ENCODE measurements at regions of chr22 and their contacts with region 1.

Region 1: DNA sequence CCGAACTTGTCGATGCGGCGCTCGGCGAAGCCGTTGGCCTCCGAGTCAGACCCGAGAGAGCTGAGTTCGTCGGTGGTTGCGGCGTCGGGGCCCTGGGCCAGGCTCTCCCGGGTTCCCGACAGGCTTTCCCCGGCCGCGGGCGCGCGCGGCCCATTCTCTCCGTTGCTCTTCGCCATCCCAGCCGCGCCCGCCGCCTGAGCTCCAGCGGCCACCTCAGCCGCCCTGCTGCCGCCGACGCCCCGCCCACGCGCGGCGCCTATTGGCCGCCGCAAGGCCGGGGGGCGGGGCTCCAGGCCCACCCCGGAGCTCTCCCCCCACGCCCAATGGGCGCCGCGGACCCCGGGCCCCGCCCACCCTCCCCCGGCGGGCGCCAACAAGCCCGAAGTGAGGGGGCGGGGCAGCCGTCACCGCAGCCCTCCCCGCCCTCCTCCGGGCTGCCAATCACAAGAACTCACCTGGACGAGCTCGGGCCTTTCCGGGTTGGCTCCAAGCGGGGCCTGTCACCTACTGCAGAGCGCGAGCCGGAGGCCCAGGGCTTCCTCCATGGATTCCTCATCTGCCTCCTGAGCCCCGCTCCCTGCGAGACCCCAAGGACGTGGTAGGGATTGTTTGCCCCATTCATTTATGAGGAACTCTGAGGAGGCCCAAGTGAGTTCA is at the start of gene TBC1D10A:
- DNase-seq: peak; percentile 95
- H3K4me3 Mint-ChIP-seq: peak within 1 kb of the TSS; percentile 90
- H3K27ac Mint-ChIP-seq: peak within 1 kb of the TSS; percentile 90
- H3K4me1 Mint-ChIP-seq: peaks cover 45% of the 10 kb centered on the region
- H3K27me3 Mint-ChIP-seq: no peaks in the 10 kb centered on the region
- total RNA-seq, gene TBC1D10A: 45.5 to 47.6 TPM

Region 2: GRCh38 chr22:30305519-30305905 is 21.3 kb before region 1 on chr22:
- CTCF ChIA-PET with region 1: interaction called, 11 read pairs
- POLR2A ChIA-PET with region 1: interaction called, 3 read pairs
- DNase-seq: peak; percentile 80
- H3K4me3 Mint-ChIP-seq: peak overlapping the region; percentile 78
- H3K27ac Mint-ChIP-seq: peak overlapping the region; percentile 92
- H3K4me1 Mint-ChIP-seq: peaks cover 99% of the 10 kb centered on the region
- H3K27me3 Mint-ChIP-seq: no peaks in the 10 kb centered on the region

Region 3: GRCh38 chr22:30310881-30311771 is 15.7 kb before region 1 on chr22:
- CTCF ChIA-PET with region 1: interaction called, 11 read pairs
- POLR2A ChIA-PET with region 1: interaction called, 13 read pairs
- DNase-seq: no peak
- H3K4me3 Mint-ChIP-seq: no peak overlapping the region
- H3K27ac Mint-ChIP-seq: peak overlapping the region; percentile 89
- H3K4me1 Mint-ChIP-seq: peaks cover 97% of the 10 kb centered on the region
- H3K27me3 Mint-ChIP-seq: no peaks in the 10 kb centered on the region